B cell (primary cell): ENCODE measurements at regions of chr13 and their contacts with region 1.

Region 1: GRCh38 chr13:35164324-35164932 is 222.4 kb downstream of the NBEA start:
- DNase-seq: peak; percentile 50
- ATAC-seq: peak; percentile 21
- H3K4me3 ChIP-seq: no peak overlapping the region
- H3K4me3 Mint-ChIP-seq: no peak overlapping the region
- H3K27ac ChIP-seq: no peak overlapping the region
- H3K27ac Mint-ChIP-seq: no peak overlapping the region
- H3K4me1 ChIP-seq: peaks cover 4 to 6% of the 10 kb centered on the region in 2 donors
- H3K4me1 Mint-ChIP-seq: peaks cover 6% of the 10 kb centered on the region
- H3K27me3 ChIP-seq: no peaks in the 10 kb centered on the region
- H3K27me3 Mint-ChIP-seq: no peaks in the 10 kb centered on the region
- CTCF ChIP-seq: peak; percentile 91

Region 2: GRCh38 chr13:33799950-33800592 is 1364.4 kb before region 1 on chr13:
- CTCF ChIA-PET with region 1: interaction called, 11 read pairs
- POLR2A ChIA-PET with region 1: no interaction called
- intact Hi-C with region 1: loop called (anchors 5 kb)
- DNase-seq: no peak
- ATAC-seq: no peak
- H3K4me3 ChIP-seq: no peak overlapping the region
- H3K4me3 Mint-ChIP-seq: no peak overlapping the region
- H3K27ac ChIP-seq: no peak overlapping the region
- H3K27ac Mint-ChIP-seq: no peak overlapping the region
- H3K4me1 ChIP-seq: no peaks in the 10 kb centered on the region
- H3K4me1 Mint-ChIP-seq: peaks cover 4% of the 10 kb centered on the region
- H3K27me3 ChIP-seq: peaks cover 0 to 8% (median 0%) of the 10 kb centered on the region in 4 experiments
- H3K27me3 Mint-ChIP-seq: peaks cover 17% of the 10 kb centered on the region
- CTCF ChIP-seq: no peak

Region 3: GRCh38 chr13:33817901-33818706 is 1346.3 kb before region 1 on chr13 and contains the start of gene RFC3:
- CTCF ChIA-PET with region 1: no interaction called
- POLR2A ChIA-PET with region 1: no interaction called
- intact Hi-C with region 1: loop called (anchors 5 kb)
- DNase-seq: peak; percentile 94
- ATAC-seq: peak; percentile 84
- H3K4me3 ChIP-seq: peak within 1 kb of the TSS; percentile 83 to 97 (median 94)
- H3K4me3 Mint-ChIP-seq: peak within 1 kb of the TSS; percentile 94
- H3K27ac ChIP-seq: peak within 1 kb of the TSS; percentile 50 to 63
- H3K27ac Mint-ChIP-seq: peak within 1 kb of the TSS; percentile 90
- H3K4me1 ChIP-seq: peaks cover 3 to 13% of the 10 kb centered on the region in 2 donors
- H3K4me1 Mint-ChIP-seq: peaks cover 18% of the 10 kb centered on the region
- H3K27me3 ChIP-seq: no peaks in the 10 kb centered on the region
- H3K27me3 Mint-ChIP-seq: no peaks in the 10 kb centered on the region
- CTCF ChIP-seq: no peak
- total RNA-seq, gene RFC3: 9.2 and 9.4 TPM in 2 replicates

Region 4: DNA sequence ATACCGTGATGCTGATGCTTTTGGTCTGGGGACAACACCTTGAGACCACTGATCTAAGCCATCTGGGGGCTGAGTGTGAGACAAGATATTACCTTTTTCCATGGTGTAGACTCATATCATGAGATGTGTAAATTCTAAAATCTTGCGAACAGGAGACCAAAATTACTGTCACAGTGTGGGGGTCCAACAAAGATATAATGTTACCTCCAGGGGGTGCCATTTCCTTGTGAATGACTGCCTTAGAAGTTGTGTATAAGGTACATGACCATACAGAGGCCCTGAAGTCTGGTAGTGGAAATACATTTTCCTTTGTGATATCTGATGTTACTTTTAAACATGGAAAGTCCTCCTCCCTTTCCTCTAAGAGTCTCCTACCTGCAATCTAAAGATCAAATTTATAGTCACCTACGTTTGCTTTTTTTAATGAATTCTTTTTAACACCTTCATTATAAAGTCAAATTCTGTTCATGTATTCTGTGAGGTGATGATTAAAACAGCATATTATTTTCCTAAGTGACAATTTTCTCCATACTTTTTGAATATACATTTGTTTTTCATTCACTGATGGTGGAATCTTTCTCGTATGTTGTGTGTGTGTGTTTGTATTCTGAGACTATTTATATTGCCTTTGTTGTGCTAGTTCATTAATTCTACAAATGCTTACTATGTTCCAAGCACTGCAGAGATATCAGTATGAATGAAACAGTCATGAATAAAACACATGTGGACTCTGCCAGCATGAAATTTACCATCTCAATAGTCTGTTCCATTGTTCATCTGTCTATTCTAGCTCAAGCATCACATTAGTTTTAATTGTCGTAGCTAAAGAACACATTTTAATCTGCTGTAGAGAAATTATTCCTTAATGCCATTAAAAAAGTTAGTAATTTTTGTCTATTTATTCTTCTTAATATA is 1232.8 kb before region 1 on chr13:
- CTCF ChIA-PET with region 1: no interaction called
- POLR2A ChIA-PET with region 1: no interaction called
- intact Hi-C with region 1: loop called (anchors 2 kb)
- DNase-seq: peak; percentile 8
- ATAC-seq: no peak
- H3K4me3 ChIP-seq: no peak overlapping the region
- H3K4me3 Mint-ChIP-seq: no peak overlapping the region
- H3K27ac ChIP-seq: no peak overlapping the region
- H3K27ac Mint-ChIP-seq: no peak overlapping the region
- H3K4me1 ChIP-seq: no peaks in the 10 kb centered on the region
- H3K4me1 Mint-ChIP-seq: no peaks in the 10 kb centered on the region
- H3K27me3 ChIP-seq: no peaks in the 10 kb centered on the region
- H3K27me3 Mint-ChIP-seq: no peaks in the 10 kb centered on the region
- CTCF ChIP-seq: peak; percentile 28